ENCODE measurements at regions of chr1 and their contacts with region 1.

Region 1: GRCh38 chr1:52621950-52622349 is 11.0 kb upstream of the SHISAL2A start:
- DNase-seq: no peak
- H3K4me3 ChIP-seq: no peak overlapping the region
- H3K27ac ChIP-seq: no peak overlapping the region
- H3K4me1 ChIP-seq: no peaks in the 10 kb centered on the region
- H3K27me3 ChIP-seq: peaks cover 0 to 1% (median 0%) of the 10 kb centered on the region in 4 experiments; a peak in 1 of 7 replicates
- CTCF ChIP-seq: no peak
- EP300 ChIP-seq: no peak
- POLR2A ChIP-seq: no peak
- RAD21 ChIP-seq: no peak

Region 2: GRCh38 chr1:52604063-52604770 is 17.7 kb before region 1 on chr1:
- CTCF ChIA-PET with region 1: interaction called, 13 read pairs
- POLR2A ChIA-PET with region 1: no interaction called
- DNase-seq: no peak
- H3K4me3 ChIP-seq: no peak overlapping the region
- H3K27ac ChIP-seq: no peak overlapping the region
- H3K4me1 ChIP-seq: peaks cover 0 to 10% (median 2%) of the 10 kb centered on the region in 4 experiments; a peak in 2 of 7 replicates
- H3K27me3 ChIP-seq: peaks cover 2 to 35% (median 30%) of the 10 kb centered on the region in 4 experiments
- CTCF ChIP-seq: no peak
- EP300 ChIP-seq: no peak
- POLR2A ChIP-seq: no peak
- RAD21 ChIP-seq: no peak

Measured in H1 (cell line).